ENCODE measurements at regions of chr17 and their contacts with region 1.

Region 1: GRCh38 chr17:50904521-50905459 is 38.6 kb upstream of the TOB1 start:
- DNase-seq: peak; percentile 78
- ATAC-seq: peak; percentile 74
- H3K4me3 ChIP-seq: peak overlapping the region; percentile 48 to 76 (median 52)
- H3K27ac ChIP-seq: peak overlapping the region; percentile 93
- H3K4me1 ChIP-seq: peaks cover 93% of the 10 kb centered on the region
- H3K27me3 ChIP-seq: no peaks in the 10 kb centered on the region
- CTCF ChIP-seq: peak; percentile 51
- EP300 ChIP-seq: peak in 1 of 2 experiments; percentile 58; a peak in 2 of 4 replicates
- POLR2A ChIP-seq: peak in 1 of 2 experiments; percentile 62; a peak in 1 of 4 replicates
- RAD21 ChIP-seq: peak; percentile 31; the same call in 1 of the 2 replicates

Region 2: GRCh38 chr17:50861071-50861676 is 43.6 kb before region 1 on chr17:
- CTCF ChIA-PET with region 1: interaction called, 10 read pairs
- POLR2A ChIA-PET with region 1: interaction called, 343 read pairs
- in situ Hi-C with region 1: no loop called
- intact Hi-C with region 1: loop called (anchors 2 kb)
- DNase-seq: no peak
- ATAC-seq: no peak
- H3K4me3 ChIP-seq: no peak overlapping the region
- H3K27ac ChIP-seq: no peak overlapping the region
- H3K4me1 ChIP-seq: peaks cover 57% of the 10 kb centered on the region
- H3K27me3 ChIP-seq: no peaks in the 10 kb centered on the region; a peak in 1 of 5 replicates
- CTCF ChIP-seq: no peak
- EP300 ChIP-seq: no peak
- POLR2A ChIP-seq: peak in 1 of 2 experiments; percentile 62; a peak in 1 of 4 replicates
- RAD21 ChIP-seq: no peak

Region 3: GRCh38 chr17:50893183-50893993 is 11.4 kb before region 1 on chr17:
- CTCF ChIA-PET with region 1: no interaction called
- POLR2A ChIA-PET with region 1: interaction called, 185 read pairs
- in situ Hi-C with region 1: no loop called
- intact Hi-C with region 1: loop called (anchors 1 kb)
- DNase-seq: peak; percentile 90
- ATAC-seq: peak; percentile 51
- H3K4me3 ChIP-seq: peak overlapping the region; percentile 52 to 72 (median 62)
- H3K27ac ChIP-seq: peak overlapping the region; percentile 84
- H3K4me1 ChIP-seq: peaks cover 81% of the 10 kb centered on the region
- H3K27me3 ChIP-seq: no peaks in the 10 kb centered on the region
- CTCF ChIP-seq: no peak
- EP300 ChIP-seq: peak in 1 of 2 experiments; percentile 86; a peak in 2 of 4 replicates
- POLR2A ChIP-seq: peak in 1 of 2 experiments; percentile 51; a peak in 2 of 4 replicates
- RAD21 ChIP-seq: no peak

Region 4: GRCh38 chr17:50931144-50931908 is 26.5 kb after region 1 on chr17:
- CTCF ChIA-PET with region 1: no interaction called
- POLR2A ChIA-PET with region 1: interaction called, 29 read pairs
- in situ Hi-C with region 1: no loop called
- intact Hi-C with region 1: no loop called
- DNase-seq: peak; percentile 77
- ATAC-seq: peak; percentile 89
- H3K4me3 ChIP-seq: peak overlapping the region; percentile 60 to 85 (median 76)
- H3K27ac ChIP-seq: peak overlapping the region; percentile 77
- H3K4me1 ChIP-seq: peaks cover 74% of the 10 kb centered on the region
- H3K27me3 ChIP-seq: peaks cover 1 to 13% of the 10 kb centered on the region in 2 experiments; a peak in 2 of 5 replicates
- CTCF ChIP-seq: no peak
- EP300 ChIP-seq: no peak
- POLR2A ChIP-seq: 0 out of 4 replicates have a peak, but pooled peaks have one; percentile 35 to 55
- RAD21 ChIP-seq: no peak

Measured in HepG2 (cell line).